Activated CD4-positive, alpha-beta T cell treated with anti-CD3 and anti-CD28 coated beads, Interleukin-2, amount 10 ng/mL, durations not matched to agents 24 days and 14 days (primary cell): ENCODE measurements at regions of chr2 and their contacts with region 1.

Region 1: DNA sequence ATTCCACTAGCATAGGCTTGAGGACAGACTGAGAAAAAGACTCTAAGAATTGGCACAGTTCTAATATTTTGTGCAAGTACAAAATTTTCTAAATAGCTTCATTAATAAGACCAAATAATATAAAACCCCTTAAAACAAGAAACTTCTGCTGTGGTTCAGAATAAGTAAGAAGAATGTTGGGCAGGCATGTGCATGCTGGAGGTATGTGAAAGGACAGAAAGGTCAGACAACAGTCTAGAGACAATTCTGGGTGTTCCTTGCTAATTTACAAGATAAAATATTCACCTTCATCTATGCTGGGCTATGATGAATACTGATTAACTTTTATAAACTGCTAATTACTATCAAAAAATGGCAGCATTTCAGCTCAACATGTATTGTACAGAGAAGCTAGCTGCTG is 14.9 kb downstream of the CEBPZOS start:
- DNase-seq: no peak
- H3K4me3 Mint-ChIP-seq: no peak overlapping the region
- H3K27ac Mint-ChIP-seq: no peak overlapping the region
- H3K4me1 Mint-ChIP-seq: peaks cover 8% of the 10 kb centered on the region
- H3K27me3 Mint-ChIP-seq: no peaks in the 10 kb centered on the region

Region 2: GRCh38 chr2:37244017-37244416 is 32.8 kb after region 1 on chr2:
- intact Hi-C with region 1: loop called (anchors 5 kb)
- DNase-seq: peak; percentile 60
- H3K4me3 Mint-ChIP-seq: peak overlapping the region; percentile 31
- H3K27ac Mint-ChIP-seq: peak overlapping the region; percentile 74
- H3K4me1 Mint-ChIP-seq: peaks cover 9% of the 10 kb centered on the region
- H3K27me3 Mint-ChIP-seq: no peaks in the 10 kb centered on the region